ENCODE measurements at regions of chr9 and their contacts with region 1.

Region 1: GRCh38 chr9:71768388-71769174 is at the start of gene CEMIP2:
- DNase-seq: peak; percentile 84
- ATAC-seq: peak; percentile 82
- H3K4me3 Mint-ChIP-seq: peak within 1 kb of the TSS; percentile 98
- H3K27ac Mint-ChIP-seq: peak within 1 kb of the TSS; percentile 93
- H3K4me1 Mint-ChIP-seq: peaks cover 52% of the 10 kb centered on the region
- H3K27me3 Mint-ChIP-seq: no peaks in the 10 kb centered on the region
- CTCF ChIP-seq: no peak
- total RNA-seq, gene CEMIP2: 21.3 and 25.5 TPM in 2 replicates

Region 2: DNA sequence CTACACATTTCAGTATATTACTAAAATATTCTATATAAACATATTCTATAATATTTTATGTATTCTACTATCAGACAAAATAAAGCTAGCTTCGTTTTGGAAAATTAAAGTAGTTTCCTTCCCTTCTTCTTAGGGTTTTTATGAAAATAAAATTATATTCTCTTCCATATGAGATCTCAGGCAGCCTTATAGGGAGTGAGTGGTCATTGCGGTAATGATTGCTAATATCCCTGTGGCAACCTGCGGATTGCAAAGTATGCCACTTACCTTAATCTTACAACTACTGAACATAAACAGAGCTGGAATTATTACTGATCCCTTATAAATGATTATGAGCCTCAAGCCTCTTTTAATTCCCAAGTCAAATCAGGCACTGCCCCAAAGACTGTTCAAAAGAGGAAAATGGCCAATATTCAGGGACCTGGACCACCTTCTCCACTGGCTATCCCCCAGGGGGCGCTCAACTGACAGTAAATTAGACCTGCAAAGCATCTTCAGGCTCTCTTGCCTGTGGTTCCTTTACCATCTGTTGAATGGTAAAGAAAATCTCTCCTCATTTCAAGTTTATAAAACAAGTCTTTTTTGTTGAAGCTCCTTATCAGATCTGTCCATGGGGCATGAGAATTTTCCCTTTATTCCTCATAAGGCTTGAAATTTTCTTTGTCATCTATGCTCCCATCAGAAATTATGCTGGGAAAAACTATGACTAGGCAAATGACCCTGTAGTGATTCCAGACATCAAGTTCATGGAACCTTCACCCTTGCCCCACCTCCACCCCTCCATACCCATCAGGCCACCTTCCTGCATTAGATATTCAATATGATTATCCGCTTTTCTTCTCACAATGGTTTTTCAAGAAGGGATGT is 164.2 kb before region 1 on chr9:
- CTCF ChIA-PET with region 1: interaction called, 12 read pairs
- POLR2A ChIA-PET with region 1: no interaction called
- intact Hi-C with region 1: loop called (anchors 1 kb)
- DNase-seq: peak; percentile 46
- ATAC-seq: peak; percentile 78
- H3K4me3 Mint-ChIP-seq: no peak overlapping the region
- H3K27ac Mint-ChIP-seq: no peak overlapping the region
- H3K4me1 Mint-ChIP-seq: peaks cover 4% of the 10 kb centered on the region
- H3K27me3 Mint-ChIP-seq: no peaks in the 10 kb centered on the region
- CTCF ChIP-seq: peak; percentile 59

Region 3: GRCh38 chr9:71716138-71716909 is 52.3 kb before region 1 on chr9:
- CTCF ChIA-PET with region 1: interaction called, 12 read pairs
- POLR2A ChIA-PET with region 1: interaction called, 5 read pairs
- intact Hi-C with region 1: loop called (anchors 1 kb)
- DNase-seq: no peak
- ATAC-seq: no peak
- H3K4me3 Mint-ChIP-seq: no peak overlapping the region
- H3K27ac Mint-ChIP-seq: no peak overlapping the region
- H3K4me1 Mint-ChIP-seq: no peaks in the 10 kb centered on the region
- H3K27me3 Mint-ChIP-seq: no peaks in the 10 kb centered on the region
- CTCF ChIP-seq: peak; percentile 91

Region 4: DNA sequence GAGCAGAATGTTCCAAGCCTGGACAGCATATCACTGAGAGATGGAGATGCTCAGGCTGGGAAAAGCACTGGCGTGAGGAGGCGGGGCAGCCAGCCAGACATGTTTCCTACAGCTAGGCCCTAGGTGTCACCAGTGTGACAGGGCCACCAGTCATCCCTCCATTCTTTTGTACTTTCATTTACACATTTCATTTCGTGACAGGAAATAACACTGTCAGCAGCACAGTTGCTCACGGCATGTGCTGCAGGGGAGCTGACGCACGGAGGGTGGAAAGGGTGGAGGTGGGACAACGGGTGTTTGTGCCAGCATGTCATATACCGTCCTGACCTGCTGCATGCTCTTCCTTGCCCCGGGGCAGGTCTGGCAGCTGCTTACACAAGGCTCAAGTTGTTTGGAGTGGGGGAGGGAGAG is 14.5 kb after region 1 on chr9:
- CTCF ChIA-PET with region 1: interaction called, 9 read pairs
- POLR2A ChIA-PET with region 1: interaction called, 24 read pairs
- intact Hi-C with region 1: loop called (anchors 1 kb)
- DNase-seq: peak; percentile 37
- ATAC-seq: peak; percentile 83
- H3K4me3 Mint-ChIP-seq: peak overlapping the region; percentile 68
- H3K27ac Mint-ChIP-seq: peak overlapping the region; percentile 92
- H3K4me1 Mint-ChIP-seq: peaks cover 41% of the 10 kb centered on the region
- H3K27me3 Mint-ChIP-seq: no peaks in the 10 kb centered on the region
- CTCF ChIP-seq: no peak

Region 5: GRCh38 chr9:71819115-71819739 is 50.6 kb after region 1 on chr9:
- CTCF ChIA-PET with region 1: interaction called, 5 read pairs
- POLR2A ChIA-PET with region 1: interaction called, 11 read pairs
- intact Hi-C with region 1: loop called (anchors 1 kb)
- DNase-seq: no peak
- ATAC-seq: no peak
- H3K4me3 Mint-ChIP-seq: no peak overlapping the region
- H3K27ac Mint-ChIP-seq: no peak overlapping the region
- H3K4me1 Mint-ChIP-seq: peaks cover 31% of the 10 kb centered on the region
- H3K27me3 Mint-ChIP-seq: no peaks in the 10 kb centered on the region
- CTCF ChIP-seq: peak; percentile 59

Region 6: DNA sequence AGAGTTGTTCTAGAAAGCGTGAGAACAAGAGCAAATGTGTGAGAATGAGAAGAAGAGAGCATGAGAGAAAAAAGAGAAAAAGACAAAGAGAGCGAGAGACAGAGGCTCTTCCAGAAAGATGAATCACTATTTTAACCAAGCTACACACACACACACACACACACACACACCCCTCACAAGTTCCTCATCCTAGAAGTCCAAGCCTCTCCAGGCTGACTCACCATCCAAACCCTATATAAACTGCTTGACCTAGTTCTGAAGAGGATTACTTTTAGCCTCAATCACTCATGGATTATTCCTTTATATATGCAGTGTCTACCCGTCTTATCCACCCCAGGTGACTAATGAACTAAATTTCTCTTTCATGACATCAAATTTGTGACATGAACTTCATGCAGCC is 254.3 kb after region 1 on chr9:
- CTCF ChIA-PET with region 1: interaction called, 6 read pairs
- POLR2A ChIA-PET with region 1: interaction called, 4 read pairs
- intact Hi-C with region 1: loop called (anchors 1 kb)
- DNase-seq: no peak
- ATAC-seq: no peak
- H3K4me3 Mint-ChIP-seq: no peak overlapping the region
- H3K27ac Mint-ChIP-seq: no peak overlapping the region
- H3K4me1 Mint-ChIP-seq: no peaks in the 10 kb centered on the region
- H3K27me3 Mint-ChIP-seq: no peaks in the 10 kb centered on the region
- CTCF ChIP-seq: no peak

Measured in activated B cell treated with CpG ODN at 0.5 μM for 24 hours (primary cell).